Natural killer cell (primary cell): ENCODE measurements at regions of chr19 and their contacts with region 1.

Region 1: GRCh38 chr19:7799640-7800355 is 30.2 kb upstream of the EVI5L start:
- DNase-seq: peak in 1 of 2 donors; percentile 81
- ATAC-seq: peak in 2 of 3 donors; percentile 49 to 66
- H3K4me3 ChIP-seq: no peak overlapping the region
- H3K4me3 Mint-ChIP-seq: no peak overlapping the region
- H3K27ac ChIP-seq: no peak overlapping the region
- H3K27ac Mint-ChIP-seq: no peak overlapping the region
- H3K4me1 ChIP-seq: peaks cover 6% of the 10 kb centered on the region
- H3K4me1 Mint-ChIP-seq: no peaks in the 10 kb centered on the region
- H3K27me3 ChIP-seq: peaks cover 2% of the 10 kb centered on the region
- H3K27me3 Mint-ChIP-seq: peaks cover 7 to 25% of the 10 kb centered on the region in 2 donors
- CTCF ChIP-seq: peak; percentile 65

Region 2: GRCh38 chr19:7101498-7102253 is 698.1 kb before region 1 on chr19:
- intact Hi-C with region 1: loop called (anchors 1 kb)
- DNase-seq: peak in 1 of 2 donors; percentile 48
- ATAC-seq: no peak
- H3K4me3 ChIP-seq: no peak overlapping the region
- H3K4me3 Mint-ChIP-seq: peak overlapping the region; percentile 49
- H3K27ac ChIP-seq: no peak overlapping the region
- H3K27ac Mint-ChIP-seq: no peak overlapping the region
- H3K4me1 ChIP-seq: peaks cover 10% of the 10 kb centered on the region
- H3K4me1 Mint-ChIP-seq: peaks cover 10 to 20% of the 10 kb centered on the region in 2 donors
- H3K27me3 ChIP-seq: no peaks in the 10 kb centered on the region
- H3K27me3 Mint-ChIP-seq: no peaks in the 10 kb centered on the region
- CTCF ChIP-seq: no peak

Region 3: DNA sequence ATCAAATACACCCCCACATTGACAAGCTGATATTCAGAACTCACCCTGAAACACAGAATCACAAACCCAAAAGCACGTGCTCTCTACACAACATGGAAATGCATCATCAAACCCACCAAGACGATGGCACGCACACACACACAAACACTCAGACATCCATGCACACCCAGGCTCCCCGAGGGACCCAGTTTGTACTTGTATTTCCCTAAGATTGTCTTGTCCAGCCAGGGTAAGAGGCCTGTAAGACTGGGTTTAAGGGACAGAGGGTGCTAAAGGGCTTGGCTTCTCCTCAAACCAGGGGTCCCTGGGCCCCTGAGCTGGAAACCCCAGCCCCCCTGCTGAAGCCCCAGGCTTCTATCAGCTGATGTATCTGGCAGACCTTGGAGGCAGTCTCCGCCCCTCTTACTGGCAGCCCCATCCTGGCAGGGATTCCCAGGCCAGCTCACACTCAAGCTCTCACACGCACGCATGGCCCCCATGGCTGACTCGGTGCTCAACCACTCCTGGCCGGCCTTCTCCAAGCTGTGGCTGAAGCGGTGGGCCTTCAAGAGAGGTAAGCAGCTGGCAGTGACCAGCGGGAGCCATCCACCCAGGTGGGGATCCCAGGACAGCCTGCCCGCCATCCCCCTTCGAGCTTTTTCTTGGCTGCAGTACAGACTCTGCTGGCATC is 444.5 kb before region 1 on chr19:
- intact Hi-C with region 1: loop called (anchors 5 kb)
- DNase-seq: no peak
- ATAC-seq: no peak
- H3K4me3 ChIP-seq: no peak overlapping the region
- H3K4me3 Mint-ChIP-seq: no peak overlapping the region
- H3K27ac ChIP-seq: no peak overlapping the region
- H3K27ac Mint-ChIP-seq: peak overlapping the region in 1 of 2 donors; percentile 76
- H3K4me1 ChIP-seq: peaks cover 32% of the 10 kb centered on the region
- H3K4me1 Mint-ChIP-seq: peaks cover 51 to 69% of the 10 kb centered on the region in 2 donors
- H3K27me3 ChIP-seq: no peaks in the 10 kb centered on the region
- H3K27me3 Mint-ChIP-seq: no peaks in the 10 kb centered on the region
- CTCF ChIP-seq: no peak

Region 4: DNA sequence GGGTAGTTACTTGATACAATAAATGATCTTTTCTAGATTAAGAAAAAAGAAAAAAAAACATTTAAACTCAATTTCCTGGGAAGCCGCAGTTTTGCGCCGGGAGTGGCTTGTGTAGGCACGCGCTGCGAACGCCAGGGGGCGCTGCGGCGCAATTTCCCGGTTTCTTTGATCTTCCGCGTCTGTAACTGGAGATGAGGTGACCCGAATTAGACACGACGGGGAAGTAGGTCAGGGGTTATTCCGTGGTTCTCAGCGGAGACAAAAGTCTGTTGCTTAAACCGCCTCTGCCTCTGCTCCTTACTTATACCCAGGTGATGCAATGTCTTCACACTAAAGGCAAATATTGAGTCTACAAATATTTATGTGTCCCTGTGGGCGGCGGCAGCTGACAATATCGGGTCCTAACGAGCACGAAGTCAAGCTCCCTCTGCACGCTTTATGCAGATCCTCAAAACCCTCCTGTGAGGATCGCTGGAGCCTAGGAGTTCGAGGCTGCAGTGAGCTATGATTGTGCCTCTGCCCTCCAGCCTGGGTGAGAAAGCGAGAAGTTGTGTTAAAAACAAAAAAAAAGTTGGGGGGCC is 147.6 kb before region 1 on chr19:
- intact Hi-C with region 1: loop called (anchors 1 kb)
- DNase-seq: peak; percentile 87 to 94
- ATAC-seq: peak; percentile 91 to 92 (median 92)
- H3K4me3 ChIP-seq: peak overlapping the region; percentile 13
- H3K4me3 Mint-ChIP-seq: peak overlapping the region; percentile 83
- H3K27ac ChIP-seq: peak overlapping the region; percentile 58
- H3K27ac Mint-ChIP-seq: peak overlapping the region; percentile 82 to 91
- H3K4me1 ChIP-seq: peaks cover 10% of the 10 kb centered on the region
- H3K4me1 Mint-ChIP-seq: peaks cover 5 to 10% of the 10 kb centered on the region in 2 donors
- H3K27me3 ChIP-seq: no peaks in the 10 kb centered on the region
- H3K27me3 Mint-ChIP-seq: no peaks in the 10 kb centered on the region
- CTCF ChIP-seq: peak; percentile 98

Region 5: GRCh38 chr19:7783991-7784421 is 15.8 kb before region 1 on chr19:
- intact Hi-C with region 1: no loop called
- DNase-seq: no peak
- ATAC-seq: no peak
- H3K4me3 ChIP-seq: no peak overlapping the region
- H3K4me3 Mint-ChIP-seq: no peak overlapping the region
- H3K27ac ChIP-seq: no peak overlapping the region
- H3K27ac Mint-ChIP-seq: no peak overlapping the region
- H3K4me1 ChIP-seq: peaks cover 2% of the 10 kb centered on the region
- H3K4me1 Mint-ChIP-seq: peaks cover 0 to 5% of the 10 kb centered on the region in 2 donors
- H3K27me3 ChIP-seq: peaks cover 9% of the 10 kb centered on the region
- H3K27me3 Mint-ChIP-seq: peaks cover 35 to 41% of the 10 kb centered on the region in 2 donors
- CTCF ChIP-seq: no peak

Region 6: GRCh38 chr19:7919610-7920518 is 120.1 kb after region 1 on chr19 and contains the start of gene SNAPC2:
- intact Hi-C with region 1: no loop called
- DNase-seq: peak; percentile 97 to 98
- ATAC-seq: peak; percentile 60 to 79 (median 62)
- H3K4me3 ChIP-seq: peak within 1 kb of the TSS; percentile 55
- H3K4me3 Mint-ChIP-seq: peak within 1 kb of the TSS; percentile 90
- H3K27ac ChIP-seq: peak within 1 kb of the TSS; percentile 72
- H3K27ac Mint-ChIP-seq: peak within 1 kb of the TSS; percentile 82 to 96
- H3K4me1 ChIP-seq: peaks cover 59% of the 10 kb centered on the region
- H3K4me1 Mint-ChIP-seq: peaks cover 21 to 37% of the 10 kb centered on the region in 2 donors
- H3K27me3 ChIP-seq: peaks cover 26% of the 10 kb centered on the region
- H3K27me3 Mint-ChIP-seq: peaks cover 0 to 22% of the 10 kb centered on the region in 2 donors
- CTCF ChIP-seq: no peak
- total RNA-seq, gene SNAPC2: 22.1 to 32.4 (median 27.1) TPM